Dendritic cell treated with granulocyte-macrophage colony-stimulating factor and Interleukin-4, amounts not matched to agents 40 ng/mL and 50 ng/mL, for 4 days (primary cell): ENCODE measurements at regions of chr10 and their contacts with region 1.

Region 1: DNA sequence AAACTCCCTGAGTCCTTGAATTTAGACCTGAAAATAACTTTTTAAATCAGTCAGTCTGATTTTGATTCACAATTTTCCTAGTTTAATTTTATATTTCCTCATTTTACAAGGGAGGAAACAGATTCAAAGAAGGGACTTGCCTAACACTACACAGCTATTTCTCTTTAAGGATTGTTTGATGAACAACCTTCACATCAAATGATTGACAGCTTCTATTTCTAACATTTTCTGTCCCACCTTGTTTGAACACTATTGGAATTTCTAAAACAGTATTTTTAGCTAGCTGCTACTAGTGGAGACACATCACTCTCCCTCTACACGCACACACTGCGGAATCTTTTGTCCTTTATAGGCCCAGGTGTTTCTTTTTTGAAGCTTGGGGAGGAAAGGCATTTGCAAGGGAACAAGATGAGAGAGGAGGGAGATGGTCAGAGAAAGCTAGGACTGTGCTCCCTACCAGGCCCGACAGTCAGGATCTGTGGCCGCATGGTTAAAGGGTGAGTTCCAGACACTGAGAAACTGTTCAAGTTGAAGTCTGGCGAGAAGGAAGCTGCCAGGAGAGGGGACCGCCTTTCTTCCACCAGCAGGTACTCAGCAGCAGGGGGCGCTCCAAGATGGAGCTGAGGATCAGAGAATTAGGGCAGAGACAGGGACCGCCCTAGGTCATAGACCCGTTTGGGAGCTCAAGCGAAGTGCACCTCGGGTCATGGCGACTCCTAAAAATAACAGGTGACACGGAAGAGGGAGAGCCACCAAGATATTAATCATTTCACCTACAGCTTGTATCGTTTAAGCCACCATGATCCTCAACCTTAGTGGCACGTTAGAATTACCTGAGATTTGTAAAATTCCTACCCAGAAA is 49.7 kb downstream of the DNAJC12 start:
- H3K4me3 Mint-ChIP-seq: no peak overlapping the region
- H3K27ac Mint-ChIP-seq: no peak overlapping the region
- H3K4me1 Mint-ChIP-seq: peaks cover 35% of the 10 kb centered on the region
- H3K27me3 Mint-ChIP-seq: no peaks in the 10 kb centered on the region

Region 2: DNA sequence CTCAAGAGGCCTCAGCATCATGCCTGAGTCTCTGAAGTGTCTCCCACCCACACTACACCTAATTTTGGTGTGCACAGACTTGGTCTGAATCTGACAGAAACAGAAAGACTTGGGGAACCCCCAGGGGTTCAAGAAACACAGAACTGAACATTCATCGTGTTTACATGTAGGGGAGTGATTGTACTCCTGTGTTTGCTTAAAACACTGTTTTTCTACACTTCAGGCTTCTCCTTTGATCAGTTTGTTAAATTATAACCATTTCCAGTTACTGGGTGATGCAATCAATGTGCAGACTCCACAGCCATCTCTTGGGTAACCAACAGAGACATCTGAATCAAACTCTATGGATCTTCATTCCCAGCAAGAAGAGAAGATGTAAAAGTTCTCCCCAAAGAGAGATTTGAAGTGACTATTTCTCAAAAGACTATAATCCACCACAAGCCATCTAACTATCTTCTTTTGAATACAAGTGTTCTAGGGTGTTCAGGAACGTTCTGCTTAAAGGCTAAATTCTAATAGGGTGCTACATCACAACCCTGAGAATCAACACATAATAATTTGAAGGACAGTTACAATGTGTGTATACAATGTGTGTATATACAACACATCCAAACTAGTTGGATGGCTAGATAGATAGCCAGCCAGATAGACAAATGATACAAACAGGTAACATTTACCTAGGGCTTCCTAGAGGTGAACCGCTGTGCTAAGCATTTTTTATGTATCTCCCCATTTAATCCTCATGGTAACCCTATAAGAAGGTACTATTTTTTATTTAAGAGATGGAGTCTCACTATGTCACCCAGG is 15.5 kb after region 1 on chr10:
- intact Hi-C with region 1: no loop called
- H3K4me3 Mint-ChIP-seq: no peak overlapping the region
- H3K27ac Mint-ChIP-seq: no peak overlapping the region
- H3K4me1 Mint-ChIP-seq: no peaks in the 10 kb centered on the region
- H3K27me3 Mint-ChIP-seq: no peaks in the 10 kb centered on the region

Region 3: GRCh38 chr10:67839951-67840350 is 51.7 kb after region 1 on chr10:
- intact Hi-C with region 1: loop called (anchors 5 kb)
- H3K4me3 Mint-ChIP-seq: no peak overlapping the region
- H3K27ac Mint-ChIP-seq: peak overlapping the region; percentile 53
- H3K4me1 Mint-ChIP-seq: peaks cover 30% of the 10 kb centered on the region
- H3K27me3 Mint-ChIP-seq: no peaks in the 10 kb centered on the region

Region 4: DNA sequence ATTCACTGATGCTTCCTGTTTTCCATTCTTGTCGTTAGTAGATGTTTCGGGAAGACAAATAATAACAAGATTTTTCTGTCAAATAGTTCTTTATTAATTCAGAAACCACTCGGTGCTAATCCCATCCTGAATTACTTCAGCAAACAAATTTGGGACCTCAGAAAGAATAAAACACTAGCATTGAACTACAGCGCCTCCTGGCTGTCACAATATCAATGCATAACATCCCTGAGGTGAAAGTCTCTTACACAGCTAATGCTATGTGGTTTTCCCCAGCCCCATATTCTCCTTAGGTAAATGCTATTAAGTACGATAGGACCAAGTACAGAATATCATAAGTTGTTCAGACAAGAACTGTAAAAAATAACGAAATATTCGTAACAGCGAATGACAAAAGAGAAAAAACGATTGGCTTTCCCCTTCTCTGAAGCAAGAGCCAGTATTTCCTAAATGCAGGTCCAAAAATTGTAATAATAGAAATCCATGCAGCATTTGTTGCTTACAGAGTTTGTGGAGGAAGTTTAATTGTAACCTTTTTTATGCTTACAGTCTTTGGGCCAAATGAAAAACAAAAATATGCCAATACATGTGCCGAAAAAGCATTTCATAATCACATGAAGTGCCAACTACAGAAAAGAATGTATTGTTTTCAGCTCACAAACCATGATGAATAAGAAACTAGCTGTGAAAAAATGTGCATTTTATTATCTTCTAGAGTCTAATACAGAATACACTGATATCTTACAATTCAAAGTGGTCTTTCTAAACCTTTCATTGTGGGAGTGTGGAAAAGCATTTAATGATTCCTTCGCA is 368.3 kb after region 1 on chr10:
- intact Hi-C with region 1: loop called (anchors 1 kb)
- H3K4me3 Mint-ChIP-seq: no peak overlapping the region
- H3K27ac Mint-ChIP-seq: no peak overlapping the region
- H3K4me1 Mint-ChIP-seq: no peaks in the 10 kb centered on the region
- H3K27me3 Mint-ChIP-seq: no peaks in the 10 kb centered on the region

Region 5: GRCh38 chr10:68301790-68302502 is 513.7 kb after region 1 on chr10:
- intact Hi-C with region 1: loop called (anchors 5 kb)
- H3K4me3 Mint-ChIP-seq: no peak overlapping the region
- H3K27ac Mint-ChIP-seq: no peak overlapping the region
- H3K4me1 Mint-ChIP-seq: peaks cover 30% of the 10 kb centered on the region
- H3K27me3 Mint-ChIP-seq: no peaks in the 10 kb centered on the region